ENCODE measurements at regions of chr9 and their contacts with region 1.

Region 1: DNA sequence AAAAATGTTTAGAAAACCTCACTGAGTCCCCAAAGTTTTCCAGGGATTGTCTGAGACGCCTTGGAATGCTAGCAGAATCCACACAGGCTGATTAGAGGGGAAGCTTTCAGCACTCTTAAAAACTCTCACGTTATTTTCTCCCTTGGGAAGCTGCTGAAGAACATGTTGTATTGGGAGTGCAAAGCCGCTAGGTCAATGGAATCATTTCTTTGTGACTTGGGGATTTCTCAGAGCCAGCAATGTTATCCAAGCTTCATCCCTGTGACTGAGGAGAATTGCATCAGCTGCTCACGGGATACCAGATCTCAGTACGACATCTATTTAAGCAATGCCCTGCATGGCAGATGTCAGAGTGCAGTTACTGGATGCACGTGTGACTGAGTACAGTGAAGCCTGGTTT is 426.4 kb upstream of the MPDZ start:
- DNase-seq: no peak
- ATAC-seq: peak; percentile 92
- H3K4me3 ChIP-seq: no peak overlapping the region
- H3K27ac ChIP-seq: peak overlapping the region; percentile 1 to 33
- H3K4me1 ChIP-seq: peaks cover 2 to 10% of the 10 kb centered on the region in 2 donors
- H3K27me3 ChIP-seq: no peaks in the 10 kb centered on the region

Region 2: DNA sequence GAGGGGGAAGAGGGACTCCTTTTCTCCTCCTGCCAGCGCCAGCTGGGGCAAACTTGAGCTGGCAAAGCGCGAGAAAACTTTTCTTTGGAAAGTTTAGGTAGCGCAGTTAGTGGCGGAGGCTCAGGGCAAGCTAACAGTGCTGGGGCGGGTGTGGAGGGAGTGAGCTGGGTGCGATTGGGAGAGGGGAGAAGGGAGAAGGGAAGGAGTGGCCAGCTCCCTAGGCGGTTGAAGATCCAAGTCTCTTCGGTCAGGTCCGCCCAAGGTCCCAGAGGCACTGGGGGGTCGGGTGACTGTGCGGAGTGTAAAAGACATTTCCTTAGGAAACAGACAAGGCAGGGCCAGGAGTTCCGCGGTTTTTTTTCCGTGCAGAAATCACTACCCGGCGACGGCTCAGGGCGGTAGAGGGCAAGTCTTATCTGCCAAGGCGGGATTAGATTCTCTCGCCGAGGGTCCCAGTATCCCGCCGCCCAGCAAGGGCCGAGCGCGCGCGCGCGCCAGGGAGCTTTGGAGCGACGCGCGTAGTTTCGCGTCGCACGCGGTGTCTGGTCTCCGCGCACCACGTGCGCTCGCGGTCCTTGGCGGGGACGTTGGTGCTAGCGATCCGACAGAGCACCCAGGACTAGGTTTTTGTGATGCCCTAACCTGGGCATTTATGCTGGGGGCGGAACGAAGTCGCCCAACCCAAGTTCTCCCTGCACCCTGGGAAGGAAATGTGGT is 641.6 kb after region 1 on chr9:
- intact Hi-C with region 1: loop called in 1 of 2 experiments (anchors 5 kb)
- DNase-seq: peak; percentile 66 to 82
- ATAC-seq: peak; percentile 61
- H3K4me3 ChIP-seq: peak overlapping the region; percentile 64 to 87
- H3K27ac ChIP-seq: peak overlapping the region; percentile 80 to 87
- H3K4me1 ChIP-seq: peaks cover 2 to 4% of the 10 kb centered on the region in 2 donors
- H3K27me3 ChIP-seq: no peaks in the 10 kb centered on the region

Measured in aorta (tissue), 5 donors.